Dendritic cell treated with granulocyte-macrophage colony-stimulating factor and Interleukin-4, amounts not matched to agents 40 ng/mL and 50 ng/mL, for 4 days (primary cell): ENCODE measurements at regions of chr5 and their contacts with region 1.

Region 1: GRCh38 chr5:81751009-81751835 is at the start of gene SSBP2:
- H3K4me3 Mint-ChIP-seq: peak within 1 kb of the TSS; percentile 92
- H3K27ac Mint-ChIP-seq: peak within 1 kb of the TSS; percentile 97
- H3K4me1 Mint-ChIP-seq: peaks cover 21% of the 10 kb centered on the region
- H3K27me3 Mint-ChIP-seq: peaks cover 6% of the 10 kb centered on the region

Region 2: DNA sequence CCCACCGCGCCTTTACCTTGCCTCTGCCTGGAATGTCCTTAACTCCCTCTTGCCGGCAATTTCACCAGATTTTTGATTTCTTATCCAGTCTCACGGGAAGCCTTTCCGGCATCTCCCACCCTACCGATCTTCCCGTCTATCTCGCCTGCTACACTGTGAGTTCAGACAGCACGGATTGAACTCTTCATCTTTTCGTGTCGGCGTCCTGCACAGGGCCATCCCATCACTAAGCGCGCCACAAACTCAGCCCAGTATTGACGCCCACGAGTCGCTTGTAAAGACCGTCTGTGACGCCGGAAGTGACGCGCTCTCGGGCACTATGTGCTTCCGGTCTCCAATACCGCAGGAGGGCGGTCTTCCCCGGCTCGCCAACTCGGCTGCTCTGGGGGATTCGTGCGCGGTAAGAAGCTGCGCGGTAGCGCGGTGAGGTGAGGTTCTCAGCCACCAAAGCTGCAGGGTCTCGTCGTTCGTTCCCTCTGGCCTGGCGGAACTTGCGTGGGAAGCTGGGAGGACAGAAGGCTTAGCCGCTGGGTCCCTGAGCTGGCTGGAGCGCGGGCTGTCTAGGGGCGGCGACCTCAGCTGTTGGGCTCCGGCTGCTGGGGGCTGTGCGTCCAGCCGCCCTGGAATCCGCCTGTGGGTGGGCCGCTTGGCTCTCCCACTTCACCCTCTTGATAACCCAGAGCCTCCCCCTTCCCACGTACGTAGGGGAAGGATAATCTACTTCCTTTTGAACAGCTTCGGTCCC is 449.8 kb before region 1 on chr5 and contains the start of gene ZCCHC9:
- intact Hi-C with region 1: loop called (anchors 5 kb)
- H3K4me3 Mint-ChIP-seq: peak within 1 kb of the TSS; percentile 89
- H3K27ac Mint-ChIP-seq: peak within 1 kb of the TSS; percentile 88
- H3K4me1 Mint-ChIP-seq: peaks cover 35% of the 10 kb centered on the region
- H3K27me3 Mint-ChIP-seq: no peaks in the 10 kb centered on the region

Region 3: GRCh38 chr5:81506900-81507588 is 244.2 kb before region 1 on chr5:
- intact Hi-C with region 1: loop called (anchors 1 kb)
- H3K4me3 Mint-ChIP-seq: no peak overlapping the region
- H3K27ac Mint-ChIP-seq: no peak overlapping the region
- H3K4me1 Mint-ChIP-seq: peaks cover 1% of the 10 kb centered on the region
- H3K27me3 Mint-ChIP-seq: no peaks in the 10 kb centered on the region

Region 4: DNA sequence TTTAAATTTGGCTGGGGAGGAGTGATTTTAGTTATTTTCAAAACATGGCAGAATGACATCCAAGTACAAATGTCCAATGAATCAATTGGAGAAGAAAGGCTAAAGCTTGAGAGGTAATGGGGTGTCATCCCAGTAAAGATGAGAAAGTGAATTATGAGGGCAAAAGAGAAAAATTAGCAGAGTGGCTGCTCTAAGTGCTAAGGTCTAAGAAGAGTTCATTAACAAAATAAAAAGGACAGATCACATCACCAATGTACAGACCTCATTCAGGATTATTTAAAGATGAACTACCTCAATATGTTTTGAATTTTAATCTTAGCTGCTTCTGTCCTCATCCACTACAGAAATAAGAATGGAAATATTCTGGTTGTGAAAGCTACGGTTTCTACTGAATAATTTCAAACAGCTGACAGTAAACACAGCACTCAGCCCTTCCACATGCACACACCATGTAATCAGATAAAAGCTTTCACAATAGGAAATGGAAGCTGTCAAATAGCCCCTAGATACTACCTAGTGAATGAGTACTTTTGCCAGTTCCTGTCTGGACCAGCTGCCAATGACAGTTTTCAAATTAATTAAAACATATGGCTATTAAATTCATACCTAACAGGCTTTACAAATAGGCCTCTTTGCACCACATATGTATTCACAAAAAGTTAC is 171.8 kb before region 1 on chr5:
- intact Hi-C with region 1: no loop called
- H3K4me3 Mint-ChIP-seq: no peak overlapping the region
- H3K27ac Mint-ChIP-seq: no peak overlapping the region
- H3K4me1 Mint-ChIP-seq: peaks cover 11% of the 10 kb centered on the region
- H3K27me3 Mint-ChIP-seq: no peaks in the 10 kb centered on the region

Region 5: GRCh38 chr5:81718300-81718699 is 32.9 kb before region 1 on chr5:
- intact Hi-C with region 1: no loop called
- H3K4me3 Mint-ChIP-seq: no peak overlapping the region
- H3K27ac Mint-ChIP-seq: no peak overlapping the region
- H3K4me1 Mint-ChIP-seq: peaks cover 22% of the 10 kb centered on the region
- H3K27me3 Mint-ChIP-seq: no peaks in the 10 kb centered on the region

Region 6: DNA sequence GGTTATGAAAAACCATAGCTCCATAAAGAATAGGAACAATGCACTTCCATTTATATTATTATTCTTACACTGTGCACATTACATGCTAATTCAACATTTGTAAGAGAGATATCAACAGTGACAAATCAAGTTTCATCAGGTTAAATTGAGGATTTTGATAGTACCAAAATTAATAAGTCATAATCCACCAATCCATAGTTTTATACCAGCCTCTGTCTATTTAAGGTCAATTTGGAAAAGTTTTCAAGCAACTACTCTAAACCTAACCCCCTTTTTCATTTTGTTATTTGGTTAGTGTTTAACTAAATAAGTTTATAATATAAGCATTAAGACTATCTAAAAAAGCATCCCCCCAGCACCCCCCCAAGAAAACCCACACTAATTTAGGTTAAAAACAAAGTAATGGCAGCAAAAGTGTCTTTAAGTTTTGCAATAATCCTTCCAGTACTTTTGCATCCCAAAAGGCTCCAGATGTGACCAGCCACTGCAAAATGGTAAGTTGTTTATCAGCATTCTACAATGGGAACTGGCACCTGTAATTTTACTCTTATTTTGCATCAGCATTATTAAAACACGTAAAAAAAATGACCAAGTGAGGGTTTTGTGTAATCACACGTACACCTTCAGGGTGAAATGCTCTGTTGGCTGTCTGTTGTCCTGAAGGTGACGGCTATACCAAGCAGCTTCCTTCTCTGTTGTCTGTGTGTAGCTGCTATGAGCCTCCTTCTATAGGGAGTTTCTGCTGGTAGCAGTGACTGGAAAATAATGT is 36.4 kb after region 1 on chr5:
- intact Hi-C with region 1: loop called (anchors 2 kb)
- H3K4me3 Mint-ChIP-seq: no peak overlapping the region
- H3K27ac Mint-ChIP-seq: no peak overlapping the region
- H3K4me1 Mint-ChIP-seq: peaks cover 28% of the 10 kb centered on the region
- H3K27me3 Mint-ChIP-seq: no peaks in the 10 kb centered on the region

Region 7: DNA sequence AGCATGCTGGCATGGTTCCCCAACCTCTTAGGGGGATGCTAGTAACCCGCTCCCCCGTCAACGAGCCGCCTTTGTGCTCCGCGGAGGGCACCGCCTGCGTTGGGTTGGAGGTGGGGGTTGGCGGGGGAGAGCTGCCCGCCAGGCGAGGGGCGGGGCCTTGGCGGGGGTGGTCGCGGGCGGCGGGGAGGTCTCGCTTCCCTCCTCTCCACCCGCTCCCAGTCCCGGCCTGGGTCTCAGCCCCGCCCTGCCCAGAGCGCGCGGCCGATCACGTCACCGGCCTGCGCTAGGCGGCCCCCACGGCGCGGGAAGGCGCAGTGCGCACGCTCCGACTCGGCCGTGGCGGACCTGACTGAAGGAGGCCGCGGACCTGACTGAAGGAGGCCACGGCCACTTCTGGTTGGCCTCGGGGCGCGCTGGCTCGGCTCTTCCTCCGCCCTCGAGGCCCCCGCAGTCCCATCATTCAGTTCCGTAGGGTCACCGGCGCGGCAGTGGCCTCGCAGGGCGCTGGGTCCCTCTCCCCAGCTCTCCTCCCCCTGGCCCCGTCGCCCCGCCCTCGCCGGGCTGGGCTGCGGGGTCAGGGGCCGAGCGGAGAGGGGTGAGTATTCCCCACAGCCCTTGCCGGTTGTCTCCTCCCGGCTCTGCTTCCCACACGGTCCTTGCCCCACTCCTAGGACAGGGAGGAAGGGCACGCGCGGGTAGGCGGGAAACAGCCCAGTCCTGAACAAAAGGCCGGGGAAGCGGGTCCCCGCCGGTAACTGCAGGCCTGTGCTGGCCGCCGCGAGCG is 220.7 kb after region 1 on chr5 and contains the start of gene ATG10:
- intact Hi-C with region 1: loop called (anchors 1 kb)
- H3K4me3 Mint-ChIP-seq: peak within 1 kb of the TSS; percentile 90
- H3K27ac Mint-ChIP-seq: peak within 1 kb of the TSS; percentile 97
- H3K4me1 Mint-ChIP-seq: peaks cover 11% of the 10 kb centered on the region
- H3K27me3 Mint-ChIP-seq: no peaks in the 10 kb centered on the region

Region 8: DNA sequence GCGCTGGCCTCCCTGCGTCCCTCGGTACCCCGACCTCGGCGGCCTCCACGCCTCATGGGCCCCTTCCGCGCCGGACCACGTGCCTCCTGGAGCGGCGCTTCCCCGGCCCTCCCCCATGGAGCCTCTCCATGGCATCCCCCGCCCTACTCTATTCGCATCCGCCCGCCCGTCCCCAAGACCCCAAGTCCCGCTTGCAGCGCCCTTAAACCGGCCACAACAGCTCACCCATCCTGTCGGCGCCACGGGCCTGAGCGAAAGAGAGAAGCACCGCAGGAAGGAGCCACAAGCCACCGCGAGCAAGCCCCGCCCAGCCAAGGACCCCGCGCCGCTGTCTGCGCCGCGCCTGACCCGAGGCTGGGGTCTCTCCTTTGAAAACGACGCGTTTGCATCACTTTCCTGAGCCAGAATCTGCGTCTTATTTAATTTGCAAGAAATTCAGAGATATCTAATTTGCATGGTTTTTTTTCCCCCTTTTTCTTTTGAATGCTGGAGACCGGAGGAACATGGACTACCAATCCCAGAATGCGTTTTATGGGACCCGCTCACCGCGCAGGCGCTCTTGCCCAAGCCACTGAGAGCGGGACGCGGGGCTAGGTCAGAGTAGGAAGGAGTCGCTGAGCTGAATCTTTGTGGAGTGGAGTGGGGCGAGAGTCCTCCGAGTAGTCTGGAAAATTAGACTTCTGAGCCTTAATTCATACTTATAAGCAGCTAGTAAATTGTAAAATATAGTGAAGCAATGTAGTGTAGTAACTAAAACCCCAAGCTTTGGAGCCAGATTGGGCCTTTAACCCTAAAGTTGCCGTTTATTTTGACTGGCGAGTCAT is 527.1 kb after region 1 on chr5 and contains the start of gene RPS23:
- intact Hi-C with region 1: loop called (anchors 2 kb)
- H3K4me3 Mint-ChIP-seq: peak within 1 kb of the TSS; percentile 90
- H3K27ac Mint-ChIP-seq: peak within 1 kb of the TSS; percentile 99
- H3K4me1 Mint-ChIP-seq: peaks cover 28% of the 10 kb centered on the region
- H3K27me3 Mint-ChIP-seq: no peaks in the 10 kb centered on the region